HEK293 (cell line): ENCODE measurements at regions of chr1 and their contacts with region 1.

Region 1: GRCh38 chr1:92749024-92749634 is 35.8 kb downstream of the EVI5 start:
- H3K4me3 ChIP-seq: no peak overlapping the region
- H3K27ac ChIP-seq: no peak overlapping the region
- H3K4me1 ChIP-seq: peaks cover 3% of the 10 kb centered on the region
- CTCF ChIP-seq: no peak

Region 2: GRCh38 chr1:92663775-92664174 is 85.4 kb before region 1 on chr1:
- CTCF ChIA-PET with region 1: no interaction called
- POLR2A ChIA-PET with region 1: no interaction called
- H3K4me3 ChIP-seq: no peak overlapping the region
- H3K27ac ChIP-seq: no peak overlapping the region
- H3K4me1 ChIP-seq: no peaks in the 10 kb centered on the region
- CTCF ChIP-seq: no peak

Region 3: DNA sequence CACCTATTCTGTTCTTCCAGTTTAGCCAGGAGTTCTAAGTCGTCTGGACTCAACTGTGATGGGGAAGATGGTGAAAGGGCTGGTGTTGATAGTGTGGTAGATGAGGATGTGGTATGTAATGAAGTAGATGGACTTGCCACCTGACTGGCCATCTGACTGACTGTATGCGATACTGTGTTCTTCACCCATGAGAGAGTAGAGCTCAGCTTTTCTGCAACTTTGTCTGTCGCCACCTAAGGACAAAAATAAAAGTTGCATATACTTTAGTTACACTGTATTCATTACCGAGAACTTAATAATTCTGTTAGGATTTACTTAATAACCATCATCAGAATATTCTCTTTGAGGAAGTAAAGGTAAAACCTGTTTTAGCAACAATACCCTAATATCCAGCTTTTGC is 12.7 kb before region 1 on chr1:
- CTCF ChIA-PET with region 1: interaction called, 10 read pairs
- POLR2A ChIA-PET with region 1: interaction called, 4 read pairs
- H3K4me3 ChIP-seq: no peak overlapping the region
- H3K27ac ChIP-seq: no peak overlapping the region
- H3K4me1 ChIP-seq: no peaks in the 10 kb centered on the region
- CTCF ChIP-seq: no peak

Region 4: DNA sequence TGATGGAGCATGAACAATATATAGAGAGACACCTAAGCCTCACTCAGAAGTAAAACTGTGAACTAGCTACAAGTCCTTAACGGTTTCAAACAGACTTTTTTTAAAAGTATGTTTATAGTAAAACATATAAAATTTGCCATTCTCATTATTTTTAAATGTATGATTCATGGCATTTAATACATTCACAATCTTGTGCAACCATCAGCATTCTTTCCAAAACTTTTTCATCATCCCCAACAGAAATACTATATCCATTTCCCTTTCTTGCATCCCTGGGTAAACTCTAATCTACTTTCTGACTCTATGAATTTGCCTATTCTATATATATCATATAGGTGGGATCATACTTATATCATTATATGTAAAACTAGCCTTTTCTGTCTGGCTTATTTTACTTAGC is 10.2 kb after region 1 on chr1:
- CTCF ChIA-PET with region 1: interaction called, 11 read pairs
- POLR2A ChIA-PET with region 1: no interaction called
- H3K4me3 ChIP-seq: no peak overlapping the region
- H3K27ac ChIP-seq: no peak overlapping the region
- H3K4me1 ChIP-seq: 0 out of 2 replicates have a peak, but pooled peaks cover 3% of the 10 kb centered on the region
- CTCF ChIP-seq: no peak

Region 5: DNA sequence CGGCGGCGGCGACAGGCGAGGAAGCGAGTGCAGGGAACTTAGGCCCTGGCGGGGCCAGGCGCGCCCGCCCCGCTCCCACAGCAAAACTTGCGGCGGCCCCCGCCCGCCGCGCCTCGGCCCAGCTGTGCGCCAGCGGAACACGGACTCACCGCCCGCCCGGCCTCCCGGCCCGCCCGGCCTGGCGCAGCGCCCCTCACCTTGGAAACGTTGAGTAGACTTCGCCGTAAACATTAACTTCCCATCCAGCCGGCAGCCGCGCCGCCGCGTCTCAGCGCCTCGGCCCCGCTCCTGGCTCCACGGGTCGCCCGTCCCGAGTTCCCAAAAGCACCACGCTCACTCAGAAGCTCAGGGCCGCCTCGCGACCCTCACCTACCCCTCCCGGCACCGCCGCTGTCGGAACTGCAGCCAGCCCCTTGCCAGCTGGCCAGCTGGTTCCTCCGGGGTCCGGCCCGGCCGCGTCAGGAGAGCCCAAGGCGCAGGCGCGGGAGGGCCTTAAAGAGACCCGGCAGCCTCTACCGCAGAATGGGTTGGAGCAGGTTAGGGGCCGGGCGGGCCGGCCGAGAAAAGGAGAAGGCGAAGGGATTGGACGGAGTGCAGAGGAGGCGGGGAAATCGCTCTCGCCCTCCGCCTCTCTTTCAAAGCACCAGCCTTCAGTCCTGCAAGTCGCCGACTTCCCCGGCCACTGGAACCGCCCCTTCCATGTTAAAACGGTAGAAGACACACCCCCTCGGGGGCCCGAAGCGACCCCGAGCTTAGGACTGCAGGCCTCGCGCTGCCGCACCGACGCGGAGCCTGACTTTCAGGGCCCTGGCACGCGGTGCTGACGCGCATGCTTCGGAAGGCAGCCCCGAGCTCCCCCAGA is 35.7 kb after region 1 on chr1 and contains the start of gene EVI5:
- CTCF ChIA-PET with region 1: interaction called, 18 read pairs
- POLR2A ChIA-PET with region 1: interaction called, 3 read pairs
- H3K4me3 ChIP-seq: peak within 1 kb of the TSS; percentile 59
- H3K27ac ChIP-seq: peak within 1 kb of the TSS; percentile 90
- H3K4me1 ChIP-seq: no peaks in the 10 kb centered on the region
- CTCF ChIP-seq: peak; percentile 42; the same call in 1 of the 2 replicates

Region 6: DNA sequence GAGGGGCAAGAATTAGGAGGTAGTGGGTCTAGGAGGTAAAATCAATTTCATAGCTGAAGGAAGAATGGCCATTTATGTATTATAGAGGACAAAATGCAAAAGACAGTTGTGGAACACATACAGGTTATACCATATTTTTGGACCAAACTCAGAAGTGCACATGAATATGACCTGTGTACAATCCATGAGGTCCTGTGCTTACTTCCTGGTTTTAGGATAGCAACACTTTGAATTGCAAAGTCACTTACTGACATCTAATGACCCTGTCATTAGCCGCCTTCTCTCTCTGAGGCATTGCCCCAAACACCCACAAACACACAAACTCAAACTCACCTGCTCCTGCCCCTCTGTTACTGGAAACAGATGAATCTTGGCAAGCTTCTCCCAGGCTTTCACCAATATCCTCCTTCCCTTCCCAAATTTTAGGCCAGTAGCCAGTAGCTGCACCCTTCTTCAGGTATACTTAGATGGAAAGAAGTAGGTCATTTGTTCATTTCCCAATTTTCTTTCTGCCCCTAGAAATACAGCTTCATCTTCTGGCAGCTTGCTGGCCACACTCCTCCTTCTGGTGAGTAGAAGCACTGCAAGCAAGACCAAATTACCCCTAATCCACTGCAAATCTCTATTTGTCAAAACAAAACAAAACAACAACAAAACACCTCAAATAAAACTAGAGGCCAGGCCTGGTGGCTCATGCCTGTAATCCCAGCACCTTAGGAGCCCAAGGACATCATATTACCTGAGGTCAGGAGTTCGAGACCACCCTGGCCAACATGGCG is 69.0 kb after region 1 on chr1:
- CTCF ChIA-PET with region 1: interaction called, 32 read pairs
- POLR2A ChIA-PET with region 1: no interaction called
- H3K4me3 ChIP-seq: no peak overlapping the region
- H3K27ac ChIP-seq: no peak overlapping the region
- H3K4me1 ChIP-seq: no peaks in the 10 kb centered on the region
- CTCF ChIP-seq: peak; percentile 27; the same call in 1 of the 2 replicates

Region 7: GRCh38 chr1:92831762-92832536 is 82.8 kb after region 1 on chr1 and contains the start of gene RPL5:
- CTCF ChIA-PET with region 1: interaction called, 32 read pairs
- POLR2A ChIA-PET with region 1: interaction called, 15 read pairs
- H3K4me3 ChIP-seq: peak within 1 kb of the TSS; percentile 100
- H3K27ac ChIP-seq: peak within 1 kb of the TSS; percentile 100
- H3K4me1 ChIP-seq: no peaks in the 10 kb centered on the region
- CTCF ChIP-seq: peak; percentile 99